Mammary epithelial cell (primary cell): ENCODE measurements at regions of chr18 and their contacts with region 1.

Region 1: GRCh38 chr18:78857314-78858150 is 122.1 kb upstream of the SALL3 start:
- DNase-seq: no peak
- H3K4me3 ChIP-seq: no peak overlapping the region
- H3K27ac ChIP-seq: no peak overlapping the region
- H3K4me1 ChIP-seq: no peaks in the 10 kb centered on the region
- H3K27me3 ChIP-seq: no peaks in the 10 kb centered on the region
- CTCF ChIP-seq: no peak

Region 2: GRCh38 chr18:78805840-78806239 is 51.7 kb before region 1 on chr18:
- CTCF ChIA-PET with region 1: no interaction called
- dilution Hi-C with region 1: loop called (anchors 5 kb)
- in situ Hi-C with region 1: no loop called
- intact Hi-C with region 1: no loop called
- DNase-seq: no peak
- H3K4me3 ChIP-seq: no peak overlapping the region
- H3K27ac ChIP-seq: no peak overlapping the region
- H3K4me1 ChIP-seq: no peaks in the 10 kb centered on the region
- H3K27me3 ChIP-seq: no peaks in the 10 kb centered on the region
- CTCF ChIP-seq: no peak

Region 3: DNA sequence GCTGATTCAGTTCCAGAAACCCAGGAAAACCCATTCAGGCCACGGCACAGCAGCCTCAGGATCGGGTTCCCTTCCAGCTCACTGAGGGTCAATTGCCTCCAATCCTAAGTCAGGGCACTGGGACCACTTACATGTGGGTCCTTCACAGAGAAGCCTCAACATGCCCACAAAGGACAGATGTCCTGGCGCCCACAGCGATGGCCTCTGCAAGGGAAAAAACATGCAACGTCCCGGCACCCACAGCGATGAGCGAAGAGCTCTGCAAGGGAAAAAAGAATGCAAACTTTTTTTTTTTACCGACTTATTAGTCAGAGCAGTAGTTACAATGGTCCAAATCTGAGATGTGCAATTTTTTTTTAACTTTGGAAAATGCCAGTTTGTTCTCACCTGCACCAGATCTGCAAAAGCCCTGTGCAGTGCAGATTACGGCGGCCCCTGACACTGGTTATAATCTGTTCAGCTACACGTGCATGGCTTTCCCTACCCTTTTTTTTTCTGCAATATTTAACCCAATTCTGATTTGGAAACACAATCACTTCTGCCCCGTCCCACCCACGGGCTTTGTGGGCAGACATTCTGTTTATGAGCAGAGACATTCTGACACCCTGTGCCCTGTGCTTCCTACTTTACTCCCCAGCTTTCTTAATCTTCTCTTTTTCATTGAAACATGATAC is 37.2 kb before region 1 on chr18:
- CTCF ChIA-PET with region 1: no interaction called
- dilution Hi-C with region 1: no loop called
- in situ Hi-C with region 1: no loop called
- intact Hi-C with region 1: no loop called
- DNase-seq: no peak
- H3K4me3 ChIP-seq: no peak overlapping the region
- H3K27ac ChIP-seq: no peak overlapping the region
- H3K4me1 ChIP-seq: no peaks in the 10 kb centered on the region
- H3K27me3 ChIP-seq: no peaks in the 10 kb centered on the region
- CTCF ChIP-seq: no peak

Region 4: DNA sequence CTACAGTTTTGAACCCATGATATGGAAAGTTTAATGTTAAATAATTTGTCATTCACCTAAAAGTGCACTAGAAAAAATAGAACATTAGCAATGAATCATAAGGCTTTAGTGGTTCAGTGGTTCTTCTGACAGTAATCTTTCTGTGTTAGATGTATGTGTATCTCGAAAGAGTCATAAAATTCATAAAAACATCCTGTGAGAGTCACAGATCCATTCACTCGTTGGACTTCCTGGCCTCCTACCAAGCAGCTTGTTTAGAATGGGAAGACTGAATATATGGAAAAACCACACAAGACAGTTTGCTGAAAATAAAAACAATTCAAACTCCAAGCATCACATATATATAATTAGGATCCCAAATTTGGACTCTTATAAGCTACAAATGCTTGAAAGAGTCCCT is 1286.3 kb after region 1 on chr18:
- CTCF ChIA-PET with region 1: no interaction called
- dilution Hi-C with region 1: no loop called
- in situ Hi-C with region 1: no loop called
- intact Hi-C with region 1: no loop called
- DNase-seq: peak; percentile 6
- H3K4me3 ChIP-seq: no peak overlapping the region
- H3K27ac ChIP-seq: no peak overlapping the region
- H3K4me1 ChIP-seq: peaks cover 11% of the 10 kb centered on the region
- H3K27me3 ChIP-seq: no peaks in the 10 kb centered on the region
- CTCF ChIP-seq: no peak